ENCODE measurements at regions of chr11 and their contacts with region 1.

Region 1: GRCh38 chr11:102666331-102666957 is 39.1 kb downstream of the MMP27 start:
- DNase-seq: peak; percentile 46
- ATAC-seq: peak; percentile 82
- H3K4me3 ChIP-seq: no peak overlapping the region
- H3K27ac ChIP-seq: no peak overlapping the region
- H3K4me1 ChIP-seq: peaks cover 7% of the 10 kb centered on the region; the same call in 1 of the 2 replicates
- H3K27me3 ChIP-seq: no peaks in the 10 kb centered on the region; a peak in 1 of 5 replicates
- CTCF ChIP-seq: peak; percentile 81
- EP300 ChIP-seq: no peak
- POLR2A ChIP-seq: no peak
- RAD21 ChIP-seq: peak; percentile 60; the same call in 1 of the 2 replicates

Region 2: DNA sequence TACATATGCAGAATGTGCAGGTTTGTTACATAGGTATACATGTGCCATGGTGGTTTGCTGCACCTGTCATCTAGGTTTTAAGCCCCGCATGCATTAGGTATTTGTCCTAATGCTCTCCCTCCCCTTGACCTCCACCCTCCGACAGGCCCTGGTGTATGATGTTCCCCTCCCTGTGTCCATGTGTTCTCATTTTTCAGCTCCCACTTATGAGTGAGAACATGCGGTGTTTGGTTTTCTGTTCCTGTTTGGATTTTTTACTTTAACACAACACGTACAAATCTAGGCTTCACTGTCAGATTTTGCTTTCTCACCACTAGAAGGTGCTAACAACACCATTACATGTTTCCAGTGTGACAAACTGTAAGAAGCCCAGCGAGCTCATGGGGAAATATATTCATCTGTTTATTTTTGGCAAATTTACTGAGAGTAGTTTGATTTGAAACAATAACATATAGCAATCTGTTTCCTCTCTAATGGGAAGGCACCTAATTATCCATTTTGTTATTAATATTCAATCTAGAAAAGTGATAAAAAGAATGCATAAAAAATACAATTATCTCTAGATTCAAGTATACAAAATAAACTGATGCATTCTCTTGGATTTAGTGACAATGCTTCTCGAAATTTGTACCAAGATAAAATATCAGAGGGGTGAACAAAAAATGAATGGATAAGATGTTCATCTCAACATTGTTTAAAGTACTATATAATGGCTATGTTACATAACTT is 372.4 kb before region 1 on chr11:
- CTCF ChIA-PET with region 1: no interaction called
- POLR2A ChIA-PET with region 1: no interaction called
- in situ Hi-C with region 1: no loop called
- intact Hi-C with region 1: loop called (anchors 2 kb)
- DNase-seq: peak; percentile 54
- ATAC-seq: peak; percentile 83
- H3K4me3 ChIP-seq: no peak overlapping the region
- H3K27ac ChIP-seq: no peak overlapping the region
- H3K4me1 ChIP-seq: peaks cover 28% of the 10 kb centered on the region
- H3K27me3 ChIP-seq: no peaks in the 10 kb centered on the region
- CTCF ChIP-seq: peak; percentile 74
- EP300 ChIP-seq: no peak
- POLR2A ChIP-seq: no peak
- RAD21 ChIP-seq: 0 out of 2 replicates have a peak, but pooled peaks have one; percentile 25

Region 3: GRCh38 chr11:102317099-102317767 is 349.2 kb before region 1 on chr11 and contains the start of gene BIRC3:
- CTCF ChIA-PET with region 1: no interaction called
- POLR2A ChIA-PET with region 1: no interaction called
- in situ Hi-C with region 1: no loop called
- intact Hi-C with region 1: no loop called
- DNase-seq: peak; percentile 78
- ATAC-seq: peak; percentile 98
- H3K4me3 ChIP-seq: peak within 1 kb of the TSS; percentile 59 to 80 (median 70)
- H3K27ac ChIP-seq: no peak within 1 kb of the TSS
- H3K4me1 ChIP-seq: peaks cover 29% of the 10 kb centered on the region
- H3K27me3 ChIP-seq: no peaks in the 10 kb centered on the region
- CTCF ChIP-seq: peak; percentile 59
- EP300 ChIP-seq: 0 out of 4 replicates have a peak, but pooled peaks of 1 of the 2 experiments have one; percentile 16
- POLR2A ChIP-seq: peak in 1 of 2 experiments; percentile 50; a peak in 3 of 4 replicates
- RAD21 ChIP-seq: 0 out of 2 replicates have a peak, but pooled peaks have one; percentile 25
- total RNA-seq, gene BIRC3: 4.2 and 7.5 TPM in 2 replicates

Region 4: DNA sequence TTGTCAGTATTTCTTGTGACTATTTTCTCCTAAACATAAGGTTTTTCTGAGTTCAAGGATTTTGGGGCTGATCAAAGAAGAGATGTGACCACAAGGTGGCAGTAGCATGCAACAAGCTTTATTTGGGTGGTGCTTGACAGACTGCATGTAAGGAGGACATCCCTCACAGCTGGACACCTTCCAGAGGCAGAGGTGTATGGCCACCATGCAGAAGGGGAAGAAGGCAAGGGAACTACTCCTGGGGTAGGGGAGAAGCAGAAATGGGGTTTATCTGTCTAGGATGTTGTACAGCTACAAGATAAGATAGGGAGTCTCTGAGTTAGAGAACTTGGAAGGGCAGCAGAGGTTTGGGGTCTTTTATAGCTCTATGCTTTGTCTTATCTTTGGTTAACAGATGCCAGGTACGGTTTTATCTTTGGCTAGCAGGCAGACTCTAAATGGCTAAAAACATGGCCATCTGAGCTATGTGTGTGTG is 324.6 kb before region 1 on chr11:
- CTCF ChIA-PET with region 1: interaction called, 9 read pairs
- POLR2A ChIA-PET with region 1: interaction called, 6 read pairs
- in situ Hi-C with region 1: loop called (anchors 5 kb)
- intact Hi-C with region 1: loop called (anchors 1 kb)
- DNase-seq: peak; percentile 78
- ATAC-seq: peak; percentile 86
- H3K4me3 ChIP-seq: no peak overlapping the region
- H3K27ac ChIP-seq: no peak overlapping the region
- H3K4me1 ChIP-seq: peaks cover 30% of the 10 kb centered on the region
- H3K27me3 ChIP-seq: no peaks in the 10 kb centered on the region; a peak in 1 of 5 replicates
- CTCF ChIP-seq: peak; percentile 92
- EP300 ChIP-seq: no peak
- POLR2A ChIP-seq: no peak
- RAD21 ChIP-seq: peak; percentile 65

Region 5: DNA sequence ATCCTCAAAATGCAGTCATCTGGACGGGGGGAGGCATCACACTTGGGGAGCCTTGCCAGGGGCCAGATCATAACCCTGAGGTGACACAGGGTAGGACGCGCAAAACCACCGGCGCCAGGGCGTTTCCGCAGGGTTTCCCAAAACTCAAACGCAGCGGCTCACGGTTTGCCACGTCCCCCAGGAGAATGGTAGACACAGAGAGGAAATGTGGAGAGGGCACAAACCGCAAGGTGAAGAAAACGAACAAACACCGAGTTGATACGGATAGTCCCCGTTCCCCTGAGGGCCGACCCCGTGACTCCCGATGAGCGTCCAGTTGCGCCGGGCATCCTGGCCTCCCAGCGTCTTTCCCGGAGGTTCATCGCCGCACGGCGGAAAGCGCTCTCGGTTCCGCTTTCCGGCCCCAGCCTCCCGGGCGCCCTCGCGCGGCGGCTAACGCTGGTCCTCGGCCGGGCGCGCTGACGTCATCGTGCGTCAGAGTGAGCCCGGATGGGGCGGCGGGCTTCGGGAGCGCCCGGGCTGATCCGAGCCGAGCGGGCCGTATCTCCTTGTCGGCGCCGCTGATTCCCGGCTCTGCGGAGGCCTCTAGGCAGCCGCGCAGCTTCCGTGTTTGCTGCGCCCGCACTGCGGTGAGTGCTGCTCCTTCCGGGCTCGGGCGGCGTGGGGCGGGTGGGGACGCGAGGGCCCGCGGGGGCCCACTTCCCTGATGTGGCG is 319.5 kb before region 1 on chr11 and contains the start of gene BIRC2:
- CTCF ChIA-PET with region 1: interaction called, 9 read pairs
- POLR2A ChIA-PET with region 1: interaction called, 6 read pairs
- in situ Hi-C with region 1: loop called (anchors 5 kb)
- intact Hi-C with region 1: no loop called
- DNase-seq: peak; percentile 79
- ATAC-seq: peak; percentile 96
- H3K4me3 ChIP-seq: peak within 1 kb of the TSS; percentile 85 to 98 (median 96)
- H3K27ac ChIP-seq: peak within 1 kb of the TSS; percentile 96
- H3K4me1 ChIP-seq: peaks cover 30% of the 10 kb centered on the region
- H3K27me3 ChIP-seq: no peaks in the 10 kb centered on the region; a peak in 1 of 5 replicates
- CTCF ChIP-seq: peak; percentile 95
- EP300 ChIP-seq: peak; percentile 16 to 38; a peak in 1 of 4 replicates
- POLR2A ChIP-seq: peak; percentile 78 to 82
- RAD21 ChIP-seq: peak; percentile 78
- total RNA-seq, gene BIRC2: 61.7 and 83.2 TPM in 2 replicates

Region 6: GRCh38 chr11:102530558-102530957 is 135.9 kb before region 1 on chr11 and contains the start of gene MMP7:
- CTCF ChIA-PET with region 1: no interaction called
- POLR2A ChIA-PET with region 1: no interaction called
- in situ Hi-C with region 1: no loop called
- intact Hi-C with region 1: loop called (anchors 5 kb)
- DNase-seq: no peak
- ATAC-seq: peak; percentile 83
- H3K4me3 ChIP-seq: no peak within 1 kb of the TSS
- H3K27ac ChIP-seq: no peak within 1 kb of the TSS
- H3K4me1 ChIP-seq: no peaks in the 10 kb centered on the region; the same call in 1 of the 2 replicates
- H3K27me3 ChIP-seq: peaks cover 0 to 4% of the 10 kb centered on the region in 2 experiments; a peak in 1 of 5 replicates
- CTCF ChIP-seq: no peak
- EP300 ChIP-seq: no peak
- POLR2A ChIP-seq: no peak
- RAD21 ChIP-seq: no peak
- total RNA-seq, gene MMP7: not detected in 2 replicates

Region 7: GRCh38 chr11:102592634-102593581 is 73.5 kb before region 1 on chr11:
- CTCF ChIA-PET with region 1: interaction called, 16 read pairs
- POLR2A ChIA-PET with region 1: no interaction called
- in situ Hi-C with region 1: no loop called
- intact Hi-C with region 1: loop called (anchors 1 kb)
- DNase-seq: peak; percentile 65
- ATAC-seq: peak; percentile 91
- H3K4me3 ChIP-seq: no peak overlapping the region
- H3K27ac ChIP-seq: no peak overlapping the region
- H3K4me1 ChIP-seq: peaks cover 17% of the 10 kb centered on the region
- H3K27me3 ChIP-seq: no peaks in the 10 kb centered on the region
- CTCF ChIP-seq: peak; percentile 74
- EP300 ChIP-seq: no peak
- POLR2A ChIP-seq: no peak
- RAD21 ChIP-seq: no peak

Region 8: DNA sequence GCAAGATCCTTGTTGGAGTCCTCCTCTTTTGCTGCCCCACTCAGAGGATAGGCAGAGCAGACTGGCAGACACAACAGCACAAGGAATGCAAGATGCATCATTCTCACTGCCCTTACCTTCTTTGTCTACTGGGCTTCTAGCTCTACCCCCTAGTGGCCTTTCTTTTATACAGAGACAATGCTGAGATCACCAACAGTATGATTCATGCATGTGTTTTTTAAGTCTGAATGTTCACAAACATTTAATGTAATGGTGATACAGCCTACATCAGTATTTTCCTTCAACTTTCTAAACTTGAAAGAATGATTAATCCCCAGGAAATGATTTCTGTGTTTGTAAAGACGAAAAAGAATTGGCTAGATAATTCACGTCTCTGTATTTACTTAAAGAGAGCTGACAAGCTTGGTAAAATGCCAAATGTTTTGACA is 114.1 kb after region 1 on chr11 and contains the start of gene MMP10:
- CTCF ChIA-PET with region 1: no interaction called
- POLR2A ChIA-PET with region 1: no interaction called
- in situ Hi-C with region 1: no loop called
- intact Hi-C with region 1: no loop called
- DNase-seq: peak; percentile 21
- ATAC-seq: peak; percentile 80
- H3K4me3 ChIP-seq: no peak within 1 kb of the TSS
- H3K27ac ChIP-seq: no peak within 1 kb of the TSS
- H3K4me1 ChIP-seq: no peaks in the 10 kb centered on the region
- H3K27me3 ChIP-seq: no peaks in the 10 kb centered on the region
- CTCF ChIP-seq: peak; percentile 18; the same call in 1 of the 2 replicates
- EP300 ChIP-seq: no peak
- POLR2A ChIP-seq: no peak
- RAD21 ChIP-seq: no peak
- total RNA-seq, gene MMP10: not detected in 2 replicates